ENCODE measurements at regions of chr2 and their contacts with region 1.

Region 1: DNA sequence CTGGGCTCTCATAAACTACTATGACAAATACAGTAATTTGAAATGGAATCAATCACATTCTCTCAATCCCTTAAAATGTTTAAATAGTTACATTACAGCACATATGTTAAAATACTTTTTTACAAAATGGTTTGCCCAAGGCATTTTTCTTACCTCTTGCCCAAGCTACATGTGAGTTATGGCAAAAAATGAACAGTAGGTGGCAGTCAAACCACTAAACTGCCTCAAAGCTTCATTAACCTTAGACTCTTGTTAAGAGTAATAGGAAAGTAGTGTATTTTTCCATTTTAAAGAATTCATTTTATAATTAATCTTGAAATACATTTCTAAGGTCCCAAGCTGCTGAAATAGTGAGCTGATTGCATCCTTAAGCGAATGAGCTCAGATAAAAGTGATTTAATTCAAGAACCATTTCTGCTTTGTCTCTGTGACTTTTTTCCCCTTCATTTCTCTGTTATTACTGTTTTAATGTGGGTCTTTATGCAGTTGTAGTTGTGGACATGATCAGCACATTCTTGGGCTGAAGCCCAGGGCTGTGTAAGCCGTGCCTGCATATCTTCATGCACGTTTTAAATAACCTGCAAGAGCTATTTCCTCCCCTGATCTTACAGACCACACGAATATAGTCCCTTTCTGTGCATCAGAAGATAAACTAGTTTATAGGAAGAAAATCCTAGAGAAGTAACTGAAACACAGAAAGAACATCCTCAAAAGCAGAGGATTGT is 311.8 kb downstream of the LNPK start:
- DNase-seq: peak; percentile 28

Region 2: GRCh38 chr2:175815537-175815936 is 125.3 kb after region 1 on chr2:
- CTCF ChIA-PET with region 1: interaction called, 13 read pairs
- POLR2A ChIA-PET with region 1: no interaction called
- DNase-seq: no peak